A673 (cell line): ENCODE measurements at regions of chr2 and their contacts with region 1.

Region 1: DNA sequence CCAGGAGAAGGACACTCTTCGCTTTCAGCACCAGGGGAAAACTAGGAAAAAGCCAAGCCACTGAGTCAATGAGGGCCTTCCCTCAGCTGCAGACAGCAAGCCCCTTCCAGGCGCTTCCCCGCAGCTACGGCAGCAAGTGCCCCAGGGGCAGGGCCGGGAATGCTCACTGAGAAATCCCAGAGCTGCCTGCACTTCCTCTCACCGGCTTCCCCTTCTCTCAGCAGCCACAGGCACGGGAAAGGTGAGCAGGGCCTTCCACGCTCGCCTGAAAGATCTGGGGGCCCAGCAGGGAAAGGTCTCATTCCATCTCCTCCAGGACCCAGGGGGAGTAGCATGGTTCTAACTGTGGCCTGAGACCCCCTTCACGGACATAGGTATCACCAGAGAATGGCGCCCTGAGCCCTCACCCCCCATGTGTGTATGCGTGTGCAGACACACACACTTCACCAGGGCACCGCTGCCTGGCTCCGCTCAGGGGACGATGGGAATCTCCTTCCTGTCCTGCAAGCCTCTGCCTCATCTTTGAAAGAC is 29.6 kb upstream of the FOSL2 start:
- DNase-seq: no peak
- H3K4me3 ChIP-seq: no peak overlapping the region
- H3K27ac ChIP-seq: no peak overlapping the region
- H3K4me1 ChIP-seq: no peaks in the 10 kb centered on the region
- H3K27me3 ChIP-seq: no peaks in the 10 kb centered on the region
- CTCF ChIP-seq: no peak

Region 2: GRCh38 chr2:28137221-28137620 is 225.8 kb before region 1 on chr2:
- CTCF ChIA-PET with region 1: no interaction called
- POLR2A ChIA-PET with region 1: no interaction called
- intact Hi-C with region 1: no loop called
- DNase-seq: peak; percentile 96
- H3K4me3 ChIP-seq: no peak overlapping the region
- H3K27ac ChIP-seq: no peak overlapping the region
- H3K4me1 ChIP-seq: peaks cover 28% of the 10 kb centered on the region
- H3K27me3 ChIP-seq: no peaks in the 10 kb centered on the region
- CTCF ChIP-seq: no peak

Region 3: GRCh38 chr2:28300485-28301341 is 62.3 kb before region 1 on chr2:
- CTCF ChIA-PET with region 1: no interaction called
- POLR2A ChIA-PET with region 1: no interaction called
- intact Hi-C with region 1: no loop called
- DNase-seq: no peak
- H3K4me3 ChIP-seq: no peak overlapping the region
- H3K27ac ChIP-seq: no peak overlapping the region
- H3K4me1 ChIP-seq: no peaks in the 10 kb centered on the region
- H3K27me3 ChIP-seq: no peaks in the 10 kb centered on the region
- CTCF ChIP-seq: no peak

Region 4: DNA sequence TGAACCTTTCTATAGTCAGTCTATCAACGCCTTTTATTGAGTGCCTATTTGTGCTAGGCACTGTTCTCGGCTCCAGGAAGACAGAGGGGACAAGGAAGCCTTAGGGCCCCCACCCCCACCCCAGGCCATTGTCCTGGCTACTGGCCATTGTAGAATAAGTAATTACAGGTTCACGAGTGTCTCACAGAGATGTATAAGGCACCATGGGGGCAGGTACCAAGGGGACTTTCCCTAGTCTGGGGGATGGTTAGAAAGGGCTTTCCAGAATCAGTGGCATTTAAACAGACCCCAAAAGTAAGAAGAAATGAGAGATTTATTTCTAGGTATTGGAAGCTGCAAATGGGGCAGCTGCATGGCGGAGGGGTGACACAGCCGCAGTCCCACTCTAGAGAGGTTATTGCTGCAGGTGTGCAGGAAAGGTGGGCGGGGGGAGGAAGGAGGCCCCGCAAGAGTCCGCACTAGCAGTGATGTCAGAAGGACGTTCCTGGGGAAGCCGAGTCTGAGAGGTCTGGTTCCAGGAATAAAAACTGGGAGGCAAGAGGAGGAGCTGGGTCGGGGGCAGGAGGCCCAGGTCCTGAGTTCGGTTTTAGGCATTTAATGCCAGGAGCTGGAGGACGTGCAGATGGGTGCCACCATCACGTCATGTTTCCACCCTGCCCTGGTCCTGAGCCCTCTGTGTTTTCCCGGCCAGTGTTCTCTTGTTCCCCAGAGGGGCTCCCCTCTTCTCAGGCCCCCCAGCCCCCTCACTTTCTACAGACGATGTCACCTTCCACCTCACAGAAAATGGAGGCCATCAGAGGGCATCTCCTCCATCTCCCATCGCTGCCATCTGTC is 60.1 kb after region 1 on chr2:
- CTCF ChIA-PET with region 1: no interaction called
- POLR2A ChIA-PET with region 1: interaction called, 11 read pairs
- intact Hi-C with region 1: no loop called
- DNase-seq: no peak
- H3K4me3 ChIP-seq: no peak overlapping the region
- H3K27ac ChIP-seq: no peak overlapping the region
- H3K4me1 ChIP-seq: no peaks in the 10 kb centered on the region
- H3K27me3 ChIP-seq: no peaks in the 10 kb centered on the region
- CTCF ChIP-seq: no peak

Region 5: GRCh38 chr2:28445448-28446258 is 82.6 kb after region 1 on chr2:
- CTCF ChIA-PET with region 1: no interaction called
- POLR2A ChIA-PET with region 1: no interaction called
- intact Hi-C with region 1: no loop called
- DNase-seq: peak; percentile 33
- H3K4me3 ChIP-seq: no peak overlapping the region
- H3K27ac ChIP-seq: no peak overlapping the region
- H3K4me1 ChIP-seq: no peaks in the 10 kb centered on the region
- H3K27me3 ChIP-seq: no peaks in the 10 kb centered on the region
- CTCF ChIP-seq: no peak

Region 6: DNA sequence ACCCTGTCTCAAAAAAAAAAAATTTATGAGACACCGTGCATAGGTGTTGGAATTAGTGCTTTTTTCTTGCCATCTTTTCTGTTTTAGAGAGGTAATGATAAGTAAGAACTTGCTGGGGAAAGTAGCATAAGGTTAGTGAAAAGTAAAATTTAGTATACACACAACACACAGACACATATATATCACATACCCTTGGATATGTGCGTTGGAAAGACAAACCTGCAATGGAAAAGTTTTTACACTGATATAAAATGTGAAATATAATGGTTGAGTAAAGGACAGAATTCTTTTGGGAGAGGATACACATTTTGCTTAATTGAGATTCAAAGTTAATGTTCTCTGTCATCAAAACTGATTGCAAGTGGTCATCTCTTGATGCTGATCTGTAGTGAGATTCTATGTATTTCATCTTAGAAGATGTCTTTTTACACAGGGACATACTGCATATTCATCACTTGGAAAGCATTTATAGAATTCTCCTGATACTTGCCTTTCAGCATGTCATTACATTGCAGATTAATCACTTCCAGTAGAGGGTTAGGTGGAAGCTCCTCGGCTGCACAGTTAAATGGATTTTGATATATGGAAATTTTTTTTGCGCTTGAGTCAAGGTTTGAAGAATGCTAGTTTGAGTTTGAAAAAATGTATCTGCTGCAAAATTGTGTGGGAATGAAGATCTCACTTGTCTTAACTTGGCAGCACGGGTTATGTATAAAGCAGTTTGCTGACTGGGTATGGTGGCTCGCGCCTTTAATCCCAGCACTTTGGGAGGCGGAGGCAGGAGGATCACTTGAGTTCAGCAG is 402.1 kb after region 1 on chr2:
- CTCF ChIA-PET with region 1: no interaction called
- POLR2A ChIA-PET with region 1: no interaction called
- intact Hi-C with region 1: no loop called
- DNase-seq: peak; percentile 21
- H3K4me3 ChIP-seq: no peak overlapping the region
- H3K27ac ChIP-seq: no peak overlapping the region
- H3K4me1 ChIP-seq: peaks cover 12% of the 10 kb centered on the region
- H3K27me3 ChIP-seq: no peaks in the 10 kb centered on the region
- CTCF ChIP-seq: no peak